ENCODE measurements at regions of chr7 and their contacts with region 1.

Region 1: GRCh38 chr7:31705377-31705776 is 18.4 kb downstream of the PPP1R17 start:
- DNase-seq: no peak
- H3K4me3 ChIP-seq: no peak overlapping the region
- H3K27ac ChIP-seq: no peak overlapping the region
- H3K4me1 ChIP-seq: no peaks in the 10 kb centered on the region
- H3K27me3 ChIP-seq: peaks cover 12% of the 10 kb centered on the region
- CTCF ChIP-seq: no peak

Region 2: GRCh38 chr7:31228957-31229356 is 476.4 kb before region 1 on chr7:
- CTCF ChIA-PET with region 1: no interaction called
- POLR2A ChIA-PET with region 1: no interaction called
- intact Hi-C with region 1: no loop called
- DNase-seq: no peak
- H3K4me3 ChIP-seq: no peak overlapping the region
- H3K27ac ChIP-seq: no peak overlapping the region
- H3K4me1 ChIP-seq: no peaks in the 10 kb centered on the region
- H3K27me3 ChIP-seq: no peaks in the 10 kb centered on the region
- CTCF ChIP-seq: no peak

Region 3: DNA sequence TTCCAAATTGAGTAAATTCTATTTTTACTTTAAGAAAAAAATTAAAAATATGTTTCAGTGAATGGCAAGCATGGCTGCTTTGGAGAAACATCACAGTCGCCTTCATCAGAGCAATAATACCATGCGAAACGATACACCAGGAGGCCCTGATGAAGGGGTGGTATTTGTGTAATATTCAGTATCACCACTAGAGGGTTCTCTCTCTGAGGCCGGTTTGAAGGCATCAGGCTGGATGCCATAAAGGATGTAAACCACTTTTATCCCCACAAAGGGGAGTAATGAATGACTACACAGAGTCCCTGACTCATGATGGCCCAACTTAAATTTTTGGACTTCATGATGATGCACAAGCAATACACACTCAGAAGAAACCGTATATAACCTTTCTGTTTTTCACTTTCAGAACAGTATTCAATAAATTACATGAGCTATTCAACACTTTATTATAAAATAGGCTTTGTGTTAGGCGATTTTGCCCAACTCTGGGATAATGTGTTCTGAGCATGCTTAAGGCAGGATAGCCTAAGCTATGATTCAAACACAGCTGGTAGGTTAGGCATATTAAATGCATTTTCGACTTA is 77.1 kb after region 1 on chr7:
- CTCF ChIA-PET with region 1: interaction called, 14 read pairs
- POLR2A ChIA-PET with region 1: no interaction called
- intact Hi-C with region 1: no loop called
- DNase-seq: peak; percentile 79
- H3K4me3 ChIP-seq: no peak overlapping the region
- H3K27ac ChIP-seq: no peak overlapping the region
- H3K4me1 ChIP-seq: no peaks in the 10 kb centered on the region
- H3K27me3 ChIP-seq: peaks cover 36% of the 10 kb centered on the region
- CTCF ChIP-seq: peak; percentile 78

Region 4: GRCh38 chr7:32569388-32570289 is 864.3 kb after region 1 on chr7:
- CTCF ChIA-PET with region 1: no interaction called
- POLR2A ChIA-PET with region 1: no interaction called
- intact Hi-C with region 1: no loop called
- DNase-seq: no peak
- H3K4me3 ChIP-seq: no peak overlapping the region
- H3K27ac ChIP-seq: no peak overlapping the region
- H3K4me1 ChIP-seq: peaks cover 6% of the 10 kb centered on the region
- H3K27me3 ChIP-seq: no peaks in the 10 kb centered on the region
- CTCF ChIP-seq: no peak

Measured in A673 (cell line).